Ovary (tissue), 10 donors: ENCODE measurements at regions of chr10 and their contacts with region 1.

Region 1: DNA sequence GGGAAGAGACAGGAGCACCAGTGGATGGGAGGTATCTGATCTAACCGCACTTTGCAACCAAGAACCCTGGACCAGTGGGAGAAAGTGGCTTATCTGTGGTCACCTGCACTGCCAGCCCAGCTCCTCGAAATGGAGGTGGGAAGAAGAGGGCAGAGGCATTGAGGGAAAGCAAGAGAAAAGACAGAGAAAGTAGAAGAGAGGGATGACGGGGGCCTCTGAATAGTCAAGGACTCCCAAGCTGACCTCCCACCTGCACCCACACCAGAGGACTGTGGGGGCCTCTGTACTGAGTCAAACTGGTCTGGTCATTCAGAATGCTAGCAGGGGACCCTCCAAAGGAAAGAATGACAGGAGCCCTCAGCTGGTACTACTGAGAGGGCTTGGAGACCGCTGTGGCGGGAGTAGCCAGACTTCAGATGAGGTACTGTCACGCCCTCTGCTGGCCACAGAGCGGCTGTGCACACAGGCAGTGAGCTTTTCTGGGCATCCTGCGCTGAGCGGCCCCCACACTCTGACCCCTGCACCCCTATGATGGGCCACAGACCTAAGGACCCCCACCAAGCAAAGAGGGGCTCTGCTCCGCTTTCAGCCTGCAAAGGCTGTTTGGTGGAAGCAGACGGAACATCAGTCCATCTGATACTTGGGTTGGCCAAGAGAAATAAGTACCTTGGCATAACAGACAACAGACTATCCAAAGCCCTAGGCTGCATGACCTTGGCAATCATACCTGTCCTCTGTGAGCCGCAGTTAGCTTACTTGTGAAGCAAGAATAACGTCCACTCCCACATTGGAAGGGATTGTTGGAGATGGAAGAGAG is 112.9 kb downstream of the COL13A1 start:
- DNase-seq: peak; percentile 63 to 85 (median 72)
- H3K4me3 ChIP-seq: no peak overlapping the region
- H3K27ac ChIP-seq: no peak overlapping the region
- H3K4me1 ChIP-seq: peaks cover 16% of the 10 kb centered on the region
- H3K27me3 ChIP-seq: no peaks in the 10 kb centered on the region
- CTCF ChIP-seq: peak; percentile 64 to 88 (median 68)
- EP300 ChIP-seq: no peak
- POLR2A ChIP-seq: no peak

Region 2: GRCh38 chr10:69639291-69640195 is 275.1 kb before region 1 on chr10:
- intact Hi-C with region 1: loop called (anchors 2 to 10 kb)
- DNase-seq: peak in 4 of 5 donors; percentile 23 to 55 (median 46)
- H3K4me3 ChIP-seq: no peak overlapping the region
- H3K27ac ChIP-seq: no peak overlapping the region
- H3K4me1 ChIP-seq: no peaks in the 10 kb centered on the region
- H3K27me3 ChIP-seq: no peaks in the 10 kb centered on the region
- CTCF ChIP-seq: peak in 2 of 3 donors; percentile 30 to 49
- EP300 ChIP-seq: no peak
- POLR2A ChIP-seq: no peak

Region 3: GRCh38 chr10:69644658-69645295 is 269.8 kb before region 1 on chr10:
- intact Hi-C with region 1: loop called (anchors 2 to 10 kb)
- DNase-seq: peak; percentile 23 to 75 (median 40)
- H3K4me3 ChIP-seq: no peak overlapping the region
- H3K27ac ChIP-seq: no peak overlapping the region
- H3K4me1 ChIP-seq: peaks cover 3% of the 10 kb centered on the region
- H3K27me3 ChIP-seq: no peaks in the 10 kb centered on the region
- CTCF ChIP-seq: peak in 2 of 3 donors; percentile 30 to 57
- EP300 ChIP-seq: no peak
- POLR2A ChIP-seq: no peak

Region 4: GRCh38 chr10:69696073-69696731 is 218.4 kb before region 1 on chr10:
- intact Hi-C with region 1: loop called in 1 of 4 experiments (anchors 5 kb)
- DNase-seq: peak in 2 of 5 donors; percentile 26 to 52
- H3K4me3 ChIP-seq: no peak overlapping the region
- H3K27ac ChIP-seq: no peak overlapping the region
- H3K4me1 ChIP-seq: no peaks in the 10 kb centered on the region
- H3K27me3 ChIP-seq: no peaks in the 10 kb centered on the region
- CTCF ChIP-seq: peak in 1 of 3 donors; percentile 16
- EP300 ChIP-seq: no peak
- POLR2A ChIP-seq: no peak

Region 5: DNA sequence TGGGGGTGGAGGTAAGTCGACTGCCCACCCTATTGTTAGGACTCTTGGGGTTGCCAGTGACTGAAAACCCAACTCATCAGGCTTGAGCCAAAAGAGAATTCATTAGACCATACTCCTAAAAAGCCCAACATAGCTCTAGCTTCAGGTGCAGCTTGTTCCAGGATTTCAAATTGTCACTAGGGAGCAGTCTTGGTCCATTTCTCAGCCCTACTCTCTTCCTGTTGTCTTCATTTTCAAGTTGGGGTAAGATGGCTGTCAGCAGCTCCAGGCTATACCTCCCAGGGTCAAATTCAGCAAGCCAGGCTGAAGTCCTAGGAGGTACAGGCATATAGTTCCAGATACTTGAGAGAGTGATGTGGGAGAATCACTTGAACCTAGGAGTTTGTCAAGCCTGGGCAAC is 127.8 kb before region 1 on chr10:
- intact Hi-C with region 1: loop called in 1 of 4 experiments (anchors 10 kb)
- DNase-seq: no peak
- H3K4me3 ChIP-seq: no peak overlapping the region
- H3K27ac ChIP-seq: no peak overlapping the region
- H3K4me1 ChIP-seq: no peaks in the 10 kb centered on the region
- H3K27me3 ChIP-seq: no peaks in the 10 kb centered on the region
- CTCF ChIP-seq: no peak
- EP300 ChIP-seq: no peak
- POLR2A ChIP-seq: no peak